ENCODE measurements at regions of chr4 and their contacts with region 1.

Region 1: GRCh38 chr4:173168396-173169177 is at the start of gene GALNT7:
- DNase-seq: peak; percentile 52
- ATAC-seq: peak; percentile 60
- H3K4me3 ChIP-seq: peak within 1 kb of the TSS; percentile 84
- H3K27ac ChIP-seq: peak within 1 kb of the TSS; percentile 78
- H3K4me1 ChIP-seq: peaks cover 2% of the 10 kb centered on the region; the same call in 1 of the 2 replicates
- H3K27me3 ChIP-seq: no peaks in the 10 kb centered on the region
- CTCF ChIP-seq: no peak
- POLR2A ChIP-seq: no peak
- RAD21 ChIP-seq: no peak
- total RNA-seq, gene GALNT7: 31.2 and 43.9 TPM in 2 replicates

Region 2: DNA sequence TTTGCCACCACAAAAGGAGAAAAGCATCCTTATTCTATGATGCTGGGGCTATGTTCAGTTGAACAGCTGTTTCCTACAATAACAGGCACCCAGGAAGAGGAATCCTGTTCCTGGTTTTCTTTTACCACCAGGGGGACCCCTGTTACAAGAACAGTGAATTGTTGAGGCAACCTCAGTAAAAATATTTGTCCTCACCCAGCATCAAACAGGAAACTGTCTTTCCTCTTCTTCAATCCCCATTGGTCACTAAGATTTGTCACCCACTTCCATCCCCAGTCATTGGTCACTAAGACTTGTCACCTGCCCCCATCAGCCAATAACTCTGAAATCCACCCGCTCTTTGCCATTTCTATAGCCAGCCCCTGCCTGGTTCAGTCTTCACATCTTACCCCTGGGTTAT is 143.5 kb before region 1 on chr4:
- CTCF ChIA-PET with region 1: interaction called, 5 read pairs
- POLR2A ChIA-PET with region 1: no interaction called
- dilution Hi-C with region 1: no loop called
- in situ Hi-C with region 1: no loop called
- intact Hi-C with region 1: loop called (anchors 2 kb)
- DNase-seq: peak; percentile 77
- ATAC-seq: peak; percentile 90
- H3K4me3 ChIP-seq: no peak overlapping the region
- H3K27ac ChIP-seq: no peak overlapping the region
- H3K4me1 ChIP-seq: no peaks in the 10 kb centered on the region
- H3K27me3 ChIP-seq: peaks cover 14% of the 10 kb centered on the region
- CTCF ChIP-seq: peak; percentile 87
- POLR2A ChIP-seq: no peak
- RAD21 ChIP-seq: peak; percentile 85

Region 3: GRCh38 chr4:173121076-173121561 is 47.5 kb before region 1 on chr4:
- CTCF ChIA-PET with region 1: no interaction called
- POLR2A ChIA-PET with region 1: no interaction called
- dilution Hi-C with region 1: no loop called
- in situ Hi-C with region 1: no loop called
- intact Hi-C with region 1: loop called (anchors 1 kb)
- DNase-seq: peak; percentile 25
- ATAC-seq: peak; percentile 88
- H3K4me3 ChIP-seq: no peak overlapping the region
- H3K27ac ChIP-seq: no peak overlapping the region
- H3K4me1 ChIP-seq: peaks cover 1% of the 10 kb centered on the region; the same call in 1 of the 2 replicates
- H3K27me3 ChIP-seq: no peaks in the 10 kb centered on the region
- CTCF ChIP-seq: no peak
- POLR2A ChIP-seq: no peak
- RAD21 ChIP-seq: no peak

Region 4: DNA sequence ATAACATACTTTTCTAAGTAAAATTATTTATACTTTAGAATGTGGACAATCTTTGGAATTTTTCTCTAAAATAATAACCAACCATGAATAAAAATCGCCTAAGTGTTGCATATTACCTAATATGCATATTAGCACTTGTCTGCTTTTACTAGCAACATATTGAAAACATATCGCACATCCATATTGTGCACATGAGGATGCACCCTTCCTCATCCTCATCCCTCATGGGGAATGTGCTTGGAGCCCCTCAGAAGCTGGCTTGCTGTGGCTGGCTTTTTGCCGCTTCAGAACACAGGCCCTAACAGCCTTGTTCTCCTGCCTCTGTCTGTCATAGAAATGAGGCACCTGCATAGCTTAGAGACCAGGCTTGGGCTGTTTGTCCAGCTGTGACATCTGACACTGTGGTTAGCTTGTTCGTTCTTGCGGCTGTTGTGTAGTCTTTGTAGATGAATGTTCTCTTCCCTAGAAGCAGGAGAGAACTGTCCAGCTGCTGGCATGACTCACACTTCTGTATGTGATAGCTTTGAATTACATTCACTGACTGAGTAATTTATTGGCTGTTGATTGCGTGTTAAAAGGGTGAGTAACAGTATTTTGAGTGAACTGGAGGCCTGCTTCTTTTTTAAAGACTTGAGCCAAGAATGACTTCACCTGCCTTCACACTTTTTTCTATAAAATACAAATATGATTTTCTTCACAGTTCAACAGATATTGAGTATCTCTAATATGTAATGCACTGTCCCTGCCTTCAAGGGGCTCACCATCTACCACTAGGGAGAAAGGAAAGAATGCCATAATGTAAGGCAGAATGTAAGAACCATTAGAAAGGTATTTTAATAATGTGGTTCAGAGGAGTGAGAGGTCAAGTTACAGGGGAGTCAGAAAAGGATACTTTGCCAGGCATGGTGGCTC is 83.7 kb after region 1 on chr4:
- CTCF ChIA-PET with region 1: interaction called, 3 read pairs
- POLR2A ChIA-PET with region 1: no interaction called
- dilution Hi-C with region 1: no loop called
- in situ Hi-C with region 1: no loop called
- intact Hi-C with region 1: loop called (anchors 1 kb)
- DNase-seq: peak; percentile 100
- ATAC-seq: peak; percentile 94
- H3K4me3 ChIP-seq: no peak overlapping the region
- H3K27ac ChIP-seq: no peak overlapping the region
- H3K4me1 ChIP-seq: peaks cover 5% of the 10 kb centered on the region
- H3K27me3 ChIP-seq: peaks cover 19% of the 10 kb centered on the region
- CTCF ChIP-seq: no peak
- POLR2A ChIP-seq: no peak
- RAD21 ChIP-seq: no peak; the same call in none of the 2 replicates